OCI-LY7 (cell line): ENCODE measurements at regions of chr4 and their contacts with region 1.

Region 1: DNA sequence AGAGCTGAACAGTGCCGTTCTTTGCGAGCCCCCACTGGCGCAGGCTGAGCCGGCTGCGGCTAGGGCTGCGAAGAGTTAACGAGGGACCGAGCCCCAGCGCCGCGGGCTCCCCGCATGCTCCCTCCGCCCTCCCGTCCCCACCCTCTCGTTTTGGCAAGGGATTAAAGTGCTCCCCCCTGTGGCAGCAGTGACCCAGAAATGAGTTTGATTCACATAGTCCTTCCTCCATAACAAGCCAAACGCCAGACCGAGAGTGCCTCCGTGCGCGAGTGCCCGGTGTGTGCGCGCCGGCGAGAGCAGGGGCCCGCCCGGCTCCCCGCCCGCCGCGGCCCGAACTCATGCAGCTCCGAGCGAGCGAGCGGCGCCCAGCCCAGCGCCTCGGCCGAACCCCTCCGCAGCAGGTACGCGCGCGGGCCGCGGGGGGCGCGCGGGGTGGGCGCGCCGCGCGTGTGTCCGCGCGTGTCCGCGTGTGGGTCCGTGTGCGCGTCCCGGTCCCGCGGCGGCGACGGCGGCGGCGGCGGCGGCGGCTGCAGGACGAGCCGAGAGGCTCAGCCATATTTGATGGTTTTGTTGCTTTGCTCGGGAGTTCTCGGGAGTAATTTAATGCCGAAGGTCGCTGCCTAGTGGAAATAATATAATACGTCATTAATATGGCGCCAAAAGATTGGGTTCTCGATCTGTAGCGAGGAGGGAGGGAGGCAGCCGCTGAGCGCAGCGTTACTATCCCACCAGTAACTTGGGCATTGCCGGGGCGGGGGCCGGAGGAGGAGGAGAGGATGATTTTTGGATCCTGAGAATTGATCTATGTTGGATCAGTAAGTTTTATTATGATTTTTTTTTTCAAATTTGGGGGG is at the start of gene JADE1:
- DNase-seq: peak; percentile 94
- H3K4me3 ChIP-seq: peak within 1 kb of the TSS; percentile 79
- H3K27ac ChIP-seq: peak within 1 kb of the TSS; percentile 96
- H3K4me1 ChIP-seq: peaks cover 19% of the 10 kb centered on the region
- CTCF ChIP-seq: peak; percentile 73
- total RNA-seq, gene JADE1: 43.1 and 52.8 TPM in 2 replicates

Region 2: DNA sequence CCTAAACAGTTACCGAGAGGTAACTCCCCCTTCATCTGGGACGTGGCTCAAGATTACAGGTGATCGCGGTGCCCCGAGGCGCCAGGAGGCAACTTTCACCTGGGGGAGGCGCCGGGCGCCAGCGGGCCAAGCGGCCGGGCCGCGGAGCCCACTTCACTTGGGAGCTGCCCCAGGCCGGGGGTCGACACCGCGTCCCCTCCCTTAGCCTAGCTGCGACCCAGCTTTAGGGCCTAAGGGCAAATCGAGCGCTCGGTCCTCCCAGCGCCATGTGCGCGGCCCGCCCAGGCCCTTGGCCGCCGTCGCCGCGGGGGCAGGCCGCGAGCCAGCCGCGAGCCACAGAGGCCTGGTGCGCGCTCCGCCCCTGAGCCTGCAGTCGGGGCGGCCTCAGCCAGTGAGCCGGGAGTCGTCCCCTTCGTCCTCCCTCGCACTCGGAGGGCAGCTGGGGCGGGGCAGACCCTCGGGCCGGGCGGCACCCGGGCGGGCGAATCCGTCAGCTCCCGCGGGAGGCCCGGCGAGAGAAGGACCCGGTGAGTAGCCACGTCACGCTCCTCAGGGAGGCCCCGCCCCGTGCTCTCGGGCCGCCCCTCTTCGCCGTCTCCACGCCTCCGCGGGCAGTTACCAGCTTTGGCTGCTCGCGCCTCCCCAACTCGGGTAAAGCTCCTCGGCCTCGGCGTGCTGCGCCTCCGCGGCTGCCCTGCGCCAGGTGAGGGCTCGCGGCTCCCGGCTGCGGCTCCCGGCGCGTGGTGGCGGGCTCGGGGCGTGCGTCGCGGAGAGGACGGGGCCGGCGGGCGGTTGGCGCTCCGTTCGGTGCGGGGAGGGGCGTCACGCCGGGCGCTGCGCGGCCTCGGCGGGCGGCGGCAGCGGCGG is 748.8 kb before region 1 on chr4 and contains the start of gene LARP1B:
- CTCF ChIA-PET with region 1: no interaction called
- POLR2A ChIA-PET with region 1: no interaction called
- intact Hi-C with region 1: loop called (anchors 1 kb)
- DNase-seq: peak; percentile 94
- H3K4me3 ChIP-seq: peak within 1 kb of the TSS; percentile 82
- H3K27ac ChIP-seq: peak within 1 kb of the TSS; percentile 81
- H3K4me1 ChIP-seq: peaks cover 15% of the 10 kb centered on the region
- CTCF ChIP-seq: 0 out of 2 replicates have a peak, but pooled peaks have one; percentile 13
- total RNA-seq, gene LARP1B: 16.5 and 22.1 TPM in 2 replicates

Region 3: DNA sequence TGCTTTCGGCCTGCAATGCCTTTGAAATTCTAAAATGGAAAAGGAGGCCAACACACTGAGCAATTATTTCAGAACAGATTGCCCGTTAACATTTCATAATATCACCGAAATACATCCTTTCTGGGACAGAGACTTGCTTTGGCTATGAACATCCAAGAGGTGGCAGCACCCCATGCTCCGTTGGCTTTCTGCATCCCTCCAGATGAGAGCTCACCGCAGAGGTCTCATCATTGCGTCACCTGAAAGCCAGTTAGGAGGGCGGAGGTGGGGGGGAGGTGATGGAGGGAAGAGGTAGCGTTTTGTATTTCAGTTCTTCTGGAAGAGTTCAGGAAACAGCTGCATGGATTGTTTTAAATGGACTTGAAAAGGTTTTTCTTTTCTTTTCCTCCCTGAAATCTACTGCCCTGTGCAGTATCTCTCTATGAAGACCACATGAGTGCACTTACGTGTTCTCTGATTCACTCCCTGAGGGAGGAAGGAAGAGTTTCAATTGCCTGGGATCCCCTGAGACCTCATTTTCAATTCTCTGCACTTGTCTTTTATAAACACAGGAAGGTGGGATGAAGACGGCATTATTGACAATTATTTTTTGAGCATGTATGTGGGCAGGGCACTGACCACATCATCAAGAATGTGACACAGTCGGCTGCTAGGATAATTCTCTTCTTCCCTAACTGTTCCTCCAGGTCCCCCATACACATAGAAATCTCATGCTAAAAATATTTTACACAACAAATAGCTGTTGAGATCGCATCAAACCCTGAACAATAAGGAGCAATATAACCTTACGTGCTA is 355.2 kb before region 1 on chr4:
- CTCF ChIA-PET with region 1: no interaction called
- POLR2A ChIA-PET with region 1: no interaction called
- intact Hi-C with region 1: loop called (anchors 1 kb)
- DNase-seq: peak; percentile 70
- H3K4me3 ChIP-seq: no peak overlapping the region
- H3K27ac ChIP-seq: no peak overlapping the region
- H3K4me1 ChIP-seq: no peaks in the 10 kb centered on the region
- CTCF ChIP-seq: peak; percentile 80

Region 4: DNA sequence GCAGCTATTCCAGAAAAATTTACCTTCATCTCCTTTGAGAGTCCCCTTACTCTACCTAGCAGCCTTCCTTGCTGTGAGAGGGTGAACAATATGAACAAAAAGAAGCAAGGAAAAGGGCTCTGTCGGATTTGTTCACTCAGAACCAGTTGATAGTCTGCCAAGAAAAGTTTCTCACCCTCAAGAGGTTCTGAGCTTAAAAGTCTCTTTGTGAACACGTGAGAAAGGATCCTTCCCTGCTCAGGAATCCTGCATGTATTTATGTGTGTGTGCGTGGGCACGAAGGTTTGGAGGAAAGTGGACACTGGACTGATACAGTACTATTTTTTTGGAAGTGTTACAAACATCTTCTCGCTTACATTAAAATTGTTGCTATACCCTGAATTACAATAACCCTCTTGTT is 178.8 kb before region 1 on chr4:
- CTCF ChIA-PET with region 1: no interaction called
- POLR2A ChIA-PET with region 1: no interaction called
- intact Hi-C with region 1: no loop called
- DNase-seq: no peak
- H3K4me3 ChIP-seq: no peak overlapping the region
- H3K27ac ChIP-seq: no peak overlapping the region
- H3K4me1 ChIP-seq: no peaks in the 10 kb centered on the region
- CTCF ChIP-seq: no peak

Region 5: GRCh38 chr4:128675083-128675482 is 134.6 kb before region 1 on chr4:
- CTCF ChIA-PET with region 1: no interaction called
- POLR2A ChIA-PET with region 1: no interaction called
- intact Hi-C with region 1: loop called (anchors 1 kb)
- DNase-seq: peak; percentile 46
- H3K4me3 ChIP-seq: no peak overlapping the region
- H3K27ac ChIP-seq: peak overlapping the region; percentile 47
- H3K4me1 ChIP-seq: peaks cover 15% of the 10 kb centered on the region
- CTCF ChIP-seq: no peak

Region 6: GRCh38 chr4:128751334-128751733 is 58.4 kb before region 1 on chr4:
- CTCF ChIA-PET with region 1: no interaction called
- POLR2A ChIA-PET with region 1: no interaction called
- intact Hi-C with region 1: no loop called
- DNase-seq: no peak
- H3K4me3 ChIP-seq: no peak overlapping the region
- H3K27ac ChIP-seq: no peak overlapping the region
- H3K4me1 ChIP-seq: no peaks in the 10 kb centered on the region
- CTCF ChIP-seq: no peak

Region 7: GRCh38 chr4:128863312-128864075 is 53.8 kb after region 1 on chr4:
- CTCF ChIA-PET with region 1: no interaction called
- POLR2A ChIA-PET with region 1: interaction called, 5 read pairs
- intact Hi-C with region 1: loop called (anchors 1 kb)
- DNase-seq: peak; percentile 62
- H3K4me3 ChIP-seq: no peak overlapping the region
- H3K27ac ChIP-seq: no peak overlapping the region
- H3K4me1 ChIP-seq: peaks cover 5% of the 10 kb centered on the region
- CTCF ChIP-seq: peak; percentile 97

Region 8: GRCh38 chr4:129064717-129065116 is 255.0 kb after region 1 on chr4:
- CTCF ChIA-PET with region 1: no interaction called
- POLR2A ChIA-PET with region 1: no interaction called
- intact Hi-C with region 1: no loop called
- DNase-seq: no peak
- H3K4me3 ChIP-seq: no peak overlapping the region
- H3K27ac ChIP-seq: no peak overlapping the region
- H3K4me1 ChIP-seq: peaks cover 2% of the 10 kb centered on the region
- CTCF ChIP-seq: no peak

Region 9: GRCh38 chr4:129420637-129421036 is 610.9 kb after region 1 on chr4:
- CTCF ChIA-PET with region 1: no interaction called
- POLR2A ChIA-PET with region 1: no interaction called
- intact Hi-C with region 1: no loop called
- DNase-seq: no peak
- H3K4me3 ChIP-seq: no peak overlapping the region
- H3K27ac ChIP-seq: no peak overlapping the region
- H3K4me1 ChIP-seq: no peaks in the 10 kb centered on the region
- CTCF ChIP-seq: no peak